PC-3 (cell line): ENCODE measurements at regions of chr11 and their contacts with region 1.

Region 1: GRCh38 chr11:74371279-74372049 is 26.8 kb downstream of the PGM2L1 start:
- DNase-seq: peak; percentile 94
- ATAC-seq: peak; percentile 99
- H3K4me3 ChIP-seq: no peak overlapping the region
- H3K27ac ChIP-seq: peak overlapping the region; percentile 78
- H3K4me1 ChIP-seq: peaks cover 28% of the 10 kb centered on the region
- H3K27me3 ChIP-seq: no peaks in the 10 kb centered on the region
- CTCF ChIP-seq: no peak

Region 2: DNA sequence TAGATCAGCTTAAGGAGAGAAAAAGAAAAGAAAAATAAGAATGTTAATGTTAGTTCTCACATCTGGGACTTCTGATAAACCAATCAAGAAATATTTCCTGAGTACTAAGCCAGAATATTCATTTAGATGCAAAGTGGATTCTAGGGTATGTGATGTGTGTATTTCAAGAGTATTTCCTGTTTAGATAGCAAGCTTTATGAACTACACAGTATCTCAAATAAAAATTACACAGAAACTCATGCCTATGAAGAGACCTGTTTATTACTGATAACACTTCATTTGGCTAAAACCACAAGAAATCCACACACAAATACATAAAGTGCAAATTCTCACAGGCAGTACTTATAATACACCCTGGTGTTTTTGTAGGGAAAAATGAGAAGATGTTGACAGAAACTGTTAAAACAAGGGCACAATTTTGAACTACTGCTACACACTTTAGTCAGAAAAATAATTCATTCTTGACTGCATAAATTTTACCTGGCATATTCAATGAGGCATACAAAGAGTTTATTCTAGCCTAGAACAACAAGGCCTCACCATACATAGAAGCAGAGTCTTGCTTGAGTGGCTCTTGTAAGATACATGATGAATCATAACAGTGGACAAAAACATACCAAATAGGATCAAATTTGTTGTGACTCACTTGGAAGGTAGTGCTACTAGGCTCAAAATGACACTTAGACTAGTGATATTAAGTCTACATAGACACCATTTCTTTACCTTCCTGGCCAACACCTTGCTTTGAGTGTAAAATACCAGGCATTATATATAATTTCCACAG is 41.2 kb before region 1 on chr11:
- CTCF ChIA-PET with region 1: no interaction called
- POLR2A ChIA-PET with region 1: no interaction called
- intact Hi-C with region 1: loop called (anchors 5 kb)
- DNase-seq: peak; percentile 85
- ATAC-seq: peak; percentile 100
- H3K4me3 ChIP-seq: no peak overlapping the region
- H3K27ac ChIP-seq: no peak overlapping the region
- H3K4me1 ChIP-seq: peaks cover 14% of the 10 kb centered on the region
- H3K27me3 ChIP-seq: no peaks in the 10 kb centered on the region
- CTCF ChIP-seq: no peak

Region 3: GRCh38 chr11:74546724-74547123 is 175.3 kb after region 1 on chr11:
- CTCF ChIA-PET with region 1: no interaction called
- POLR2A ChIA-PET with region 1: no interaction called
- intact Hi-C with region 1: no loop called
- DNase-seq: peak; percentile 98
- ATAC-seq: peak; percentile 93
- H3K4me3 ChIP-seq: no peak overlapping the region
- H3K27ac ChIP-seq: no peak overlapping the region
- H3K4me1 ChIP-seq: peaks cover 12% of the 10 kb centered on the region
- H3K27me3 ChIP-seq: no peaks in the 10 kb centered on the region
- CTCF ChIP-seq: no peak